Activated T-helper 1 cell treated with anti-CD3 and anti-CD28 coated beads, Interleukin-12 subunit alpha, Interleukin-12 subunit beta, Interleukin-2, Interleukin-4 antibody, amounts not matched to agents 30 ng/mL and 10 ng/mL and 1 ng/mL, durations not matched to agents 14 hours and 24 hours and 36 hours (primary cell): ENCODE measurements at regions of chr12 and their contacts with region 1.

Region 1: DNA sequence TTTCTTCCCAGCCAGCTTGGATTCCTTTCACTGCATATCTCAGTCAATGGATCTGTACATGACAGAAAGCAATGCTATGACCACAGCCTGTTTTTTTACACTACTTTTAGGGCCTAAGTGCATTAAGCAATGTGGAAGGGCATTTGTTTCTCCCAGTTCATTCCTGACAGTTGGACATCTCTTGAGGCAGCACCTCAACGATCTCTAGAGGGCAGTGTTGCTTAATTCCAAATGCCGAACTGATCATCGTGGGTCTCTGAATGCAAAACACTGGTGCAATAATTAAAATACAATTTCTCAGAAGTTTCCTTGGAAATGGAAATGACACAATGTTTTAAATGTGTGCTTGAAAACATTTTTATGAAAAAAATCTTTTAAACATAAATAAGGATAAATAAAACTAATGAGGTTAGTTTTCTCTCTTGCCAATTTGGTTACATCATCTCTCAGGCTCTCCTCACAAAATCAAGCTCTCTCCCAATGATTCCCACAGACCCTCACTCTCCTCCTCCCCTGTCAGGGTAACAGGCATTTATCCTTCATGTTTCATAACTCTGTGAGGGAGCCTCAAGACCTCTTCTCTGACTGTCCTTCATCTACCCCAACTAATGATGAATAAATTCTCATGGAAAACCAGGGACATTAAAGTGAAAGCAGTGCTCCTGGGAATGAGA is 192.4 kb upstream of the SLC16A7 start:
- DNase-seq: peak; percentile 1
- H3K4me3 Mint-ChIP-seq: no peak overlapping the region
- H3K27ac Mint-ChIP-seq: no peak overlapping the region
- H3K4me1 Mint-ChIP-seq: no peaks in the 10 kb centered on the region
- H3K27me3 Mint-ChIP-seq: no peaks in the 10 kb centered on the region

Region 2: GRCh38 chr12:59808317-59808910 is 405.0 kb after region 1 on chr12:
- intact Hi-C with region 1: loop called (anchors 1 kb)
- DNase-seq: no peak
- H3K4me3 Mint-ChIP-seq: no peak overlapping the region
- H3K27ac Mint-ChIP-seq: no peak overlapping the region
- H3K4me1 Mint-ChIP-seq: no peaks in the 10 kb centered on the region
- H3K27me3 Mint-ChIP-seq: peaks cover 5% of the 10 kb centered on the region

Region 3: GRCh38 chr12:59834659-59835474 is 431.5 kb after region 1 on chr12:
- intact Hi-C with region 1: loop called (anchors 1 kb)
- DNase-seq: no peak
- H3K4me3 Mint-ChIP-seq: no peak overlapping the region
- H3K27ac Mint-ChIP-seq: no peak overlapping the region
- H3K4me1 Mint-ChIP-seq: no peaks in the 10 kb centered on the region
- H3K27me3 Mint-ChIP-seq: peaks cover 2% of the 10 kb centered on the region